Posterior vena cava (tissue), 2 donors: ENCODE measurements at regions of chr20 and their contacts with region 1.

Region 1: GRCh38 chr20:58778760-58779159 is 71.9 kb downstream of the GNAS-AS1 start:
- DNase-seq: peak; percentile 25

Region 2: DNA sequence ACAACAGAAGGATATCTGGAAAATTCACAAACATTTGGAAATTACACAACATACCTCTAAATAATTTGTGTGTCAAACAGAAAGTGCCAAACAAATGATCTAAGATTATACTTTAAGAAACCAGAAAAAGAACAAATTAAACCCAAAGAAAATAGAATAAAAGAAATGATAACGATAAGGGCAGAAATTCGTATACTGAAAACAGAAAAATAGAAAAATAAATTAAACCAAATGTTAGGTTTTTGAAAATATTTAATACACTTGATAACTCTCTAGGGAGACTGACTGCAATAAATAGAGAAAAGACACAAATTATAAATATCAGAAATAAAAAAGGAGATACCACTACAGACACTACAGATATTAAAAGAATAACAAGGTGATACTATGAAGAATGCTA is 51.5 kb before region 1 on chr20:
- intact Hi-C with region 1: no loop called
- DNase-seq: no peak

Region 3: DNA sequence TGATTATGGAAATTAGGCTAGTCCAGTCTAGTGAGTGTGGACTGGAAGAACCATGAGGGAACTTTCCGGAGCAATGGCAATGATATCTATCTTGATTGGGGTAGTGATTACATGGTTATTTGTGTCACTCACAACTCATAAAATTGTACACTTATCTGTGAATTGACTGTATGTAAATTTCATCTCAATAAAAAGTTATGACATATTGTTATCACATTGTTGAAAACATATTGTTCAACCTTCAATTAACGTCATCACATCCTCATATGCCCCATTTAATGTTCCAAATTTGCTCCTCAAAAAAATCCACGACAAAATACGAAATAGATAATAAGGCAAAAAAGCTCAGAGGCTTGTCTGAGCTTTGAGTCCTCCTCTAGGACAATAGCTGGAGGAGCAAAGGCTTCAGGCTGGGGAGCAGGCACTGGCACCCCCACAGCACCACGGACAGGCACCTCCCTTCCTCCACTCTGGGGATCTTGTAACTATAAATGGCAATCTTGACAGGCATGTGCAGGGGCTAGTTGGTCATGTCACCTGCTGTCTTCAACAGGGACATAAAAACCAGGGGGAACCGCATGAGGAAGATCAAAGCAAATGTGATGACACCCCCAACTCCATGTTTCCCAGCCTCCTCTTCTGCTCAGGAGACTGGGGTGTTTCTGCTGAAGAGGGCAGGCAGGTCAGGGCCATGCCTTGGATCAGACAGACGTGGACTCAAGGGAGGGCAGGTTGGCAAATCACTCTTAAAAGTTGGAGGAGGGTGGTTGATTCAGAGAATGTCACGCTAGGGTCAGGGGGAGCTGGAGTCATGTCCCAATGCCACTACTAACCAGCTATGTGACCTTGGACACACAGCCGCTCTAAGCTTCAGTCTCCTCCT is 38.5 kb before region 1 on chr20:
- intact Hi-C with region 1: loop called in 1 of 2 experiments (anchors 1 kb)
- DNase-seq: peak; percentile 30

Region 4: DNA sequence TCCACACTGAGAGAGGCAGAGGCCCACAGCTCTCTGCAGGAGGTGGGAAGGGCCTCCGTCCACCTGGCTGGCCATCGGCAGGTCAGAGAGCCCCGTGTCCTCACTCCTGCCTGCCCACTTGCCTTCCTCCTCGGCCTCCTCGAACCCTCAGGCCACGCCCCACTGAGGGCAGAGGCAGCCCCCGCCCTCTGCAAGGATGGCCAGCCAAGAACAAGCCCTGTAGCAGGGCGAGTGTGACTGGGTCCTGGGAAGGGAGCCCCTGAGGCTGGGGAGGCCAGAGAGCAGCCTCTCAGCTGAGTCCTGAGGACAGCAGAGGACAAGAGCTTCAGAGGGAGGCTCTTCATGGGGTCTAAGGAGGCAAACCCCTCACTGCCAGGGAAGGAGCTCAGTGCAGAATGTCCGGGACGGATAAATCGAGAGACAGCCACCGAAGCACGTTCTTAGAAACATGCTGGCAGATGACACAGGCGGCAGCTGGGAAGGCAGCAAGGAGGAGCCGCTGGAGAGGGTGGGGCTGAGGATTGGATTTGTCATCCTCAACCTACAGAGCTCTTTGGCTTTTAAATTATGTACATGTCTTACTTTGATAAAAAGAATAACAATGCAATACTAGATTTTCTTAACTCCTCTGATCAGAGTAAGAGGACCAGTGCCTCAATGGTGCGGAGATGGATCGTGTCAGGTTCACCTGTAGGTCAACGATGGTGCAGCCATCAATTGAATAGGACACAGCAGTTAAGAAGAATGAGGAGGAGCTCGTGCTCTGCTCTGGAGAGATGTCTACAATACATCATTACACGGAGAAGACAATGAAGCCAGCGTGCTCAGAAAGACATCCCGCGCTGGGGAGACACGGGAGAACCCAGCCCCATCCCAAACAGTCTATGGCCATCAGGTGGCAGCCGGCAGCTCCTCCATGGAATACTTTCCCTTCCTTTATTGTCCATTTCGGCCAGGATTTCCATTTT is 18.9 kb after region 1 on chr20:
- intact Hi-C with region 1: loop called in 1 of 2 experiments (anchors 1 kb)
- DNase-seq: no peak